ENCODE measurements at regions of chr12 and their contacts with region 1.

Region 1: GRCh38 chr12:121893961-121894460 is 5.4 kb downstream of the PSMD9 start:
- DNase-seq: peak; percentile 63 to 65
- ATAC-seq: peak; percentile 74 to 76
- H3K4me3 ChIP-seq: no peak overlapping the region
- H3K27ac ChIP-seq: peak overlapping the region in 1 of 2 experiments; percentile 67; a peak in 3 of 6 replicates
- H3K4me1 ChIP-seq: peaks cover 32% of the 10 kb centered on the region
- CTCF ChIP-seq: no peak
- EP300 ChIP-seq: no peak
- POLR2A ChIP-seq: no peak
- RAD21 ChIP-seq: no peak

Region 2: DNA sequence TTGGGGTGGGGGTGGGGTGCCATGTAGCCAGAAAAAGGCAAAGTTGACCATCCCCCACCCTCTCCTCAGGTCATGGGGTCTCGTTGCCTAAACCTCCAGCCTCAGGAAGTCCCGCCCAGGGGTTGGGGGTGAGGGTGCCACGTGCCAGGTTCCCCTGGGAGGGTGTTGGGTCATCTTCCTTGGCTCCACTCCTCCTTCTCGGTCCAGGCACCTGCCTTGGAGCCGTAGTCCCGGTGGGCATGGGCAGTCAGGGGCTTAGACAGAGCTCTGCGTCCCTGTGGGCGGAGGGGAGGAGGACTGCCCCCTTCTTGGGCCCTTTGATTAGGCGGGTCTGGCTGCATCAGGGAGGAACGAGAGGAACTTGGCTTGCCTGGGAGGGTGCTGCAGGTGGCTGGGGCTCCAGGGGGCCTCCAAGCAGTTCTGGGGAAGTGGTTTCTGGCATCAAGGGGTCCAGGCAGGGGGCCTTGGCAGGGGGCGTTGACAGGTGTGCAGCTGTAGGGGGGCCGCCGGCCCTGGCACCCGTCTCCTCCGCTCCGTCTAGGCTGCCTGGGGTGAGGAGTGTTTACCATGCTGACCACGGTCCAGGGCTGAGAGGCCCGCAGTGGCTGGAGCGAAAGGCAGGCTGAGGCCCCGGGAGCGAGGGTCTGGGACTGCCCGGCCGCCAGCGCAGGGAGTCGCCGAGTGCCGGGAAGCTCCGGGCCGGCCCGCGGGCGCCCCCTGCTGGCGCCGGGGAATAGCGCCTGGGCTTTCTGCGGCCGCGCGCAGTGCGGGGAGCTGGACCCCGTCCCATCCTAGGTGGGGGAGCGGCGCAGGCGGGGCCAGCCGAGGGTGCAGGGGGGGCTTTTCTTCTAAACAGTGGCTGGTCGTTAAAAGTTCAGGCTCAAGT is 82.3 kb before region 1 on chr12:
- CTCF ChIA-PET with region 1: interaction called, 39 read pairs
- POLR2A ChIA-PET with region 1: interaction called, 3 read pairs
- DNase-seq: peak; percentile 70 to 72
- ATAC-seq: peak; percentile 81 to 89
- H3K4me3 ChIP-seq: peak overlapping the region; percentile 53
- H3K27ac ChIP-seq: peak overlapping the region; percentile 74 to 85
- H3K4me1 ChIP-seq: peaks cover 39% of the 10 kb centered on the region
- CTCF ChIP-seq: peak; percentile 97
- EP300 ChIP-seq: no peak
- POLR2A ChIP-seq: no peak
- RAD21 ChIP-seq: peak; percentile 54 to 92; a peak in 4 of 5 replicates

Measured in A549 (cell line).